ENCODE measurements at regions of chr6 and their contacts with region 1.

Region 1: GRCh38 chr6:42390228-42390934 is 61.3 kb downstream of the TRERF1 start:
- DNase-seq: peak; percentile 68
- H3K4me3 Mint-ChIP-seq: peak overlapping the region; percentile 63
- H3K27ac Mint-ChIP-seq: peak overlapping the region; percentile 99
- H3K4me1 Mint-ChIP-seq: peaks cover 89% of the 10 kb centered on the region
- H3K27me3 Mint-ChIP-seq: no peaks in the 10 kb centered on the region

Region 2: GRCh38 chr6:42359021-42359420 is 31.4 kb before region 1 on chr6:
- CTCF ChIA-PET with region 1: interaction called, 11 read pairs
- POLR2A ChIA-PET with region 1: no interaction called
- DNase-seq: no peak
- H3K4me3 Mint-ChIP-seq: no peak overlapping the region
- H3K27ac Mint-ChIP-seq: no peak overlapping the region
- H3K4me1 Mint-ChIP-seq: peaks cover 22% of the 10 kb centered on the region
- H3K27me3 Mint-ChIP-seq: no peaks in the 10 kb centered on the region

Region 3: DNA sequence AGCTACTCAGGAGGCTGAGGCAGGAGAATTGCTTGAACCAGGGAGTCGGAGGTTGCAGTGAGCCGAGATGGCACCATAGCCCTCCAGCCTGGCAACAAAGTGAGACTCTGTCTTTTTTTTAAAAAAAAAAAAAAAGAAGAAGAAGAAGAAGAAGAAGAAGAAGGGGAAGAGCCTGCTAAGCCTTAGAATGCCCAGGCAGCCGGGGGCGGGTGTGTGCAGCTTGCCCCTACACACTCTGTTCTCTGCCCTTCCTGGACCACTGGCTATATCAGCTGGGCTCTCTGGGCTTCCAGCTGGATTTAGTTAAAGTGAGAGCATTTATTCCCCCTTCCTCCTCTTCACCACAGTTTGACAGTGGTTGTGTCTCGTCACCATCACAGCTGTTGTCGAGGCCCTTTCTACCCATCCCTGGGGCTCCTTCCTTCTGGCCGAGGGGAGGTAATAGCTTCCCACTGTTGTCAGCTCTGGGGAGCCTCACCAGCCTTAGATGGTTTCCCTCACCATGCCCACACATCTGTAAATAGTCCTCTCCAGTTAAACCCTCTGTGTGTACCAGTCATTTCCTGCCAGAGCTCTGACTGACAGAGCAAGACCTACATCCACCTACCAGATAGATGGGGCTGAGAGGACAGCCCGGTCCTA is 16.2 kb before region 1 on chr6:
- CTCF ChIA-PET with region 1: interaction called, 14 read pairs
- POLR2A ChIA-PET with region 1: interaction called, 6 read pairs
- DNase-seq: peak; percentile 36
- H3K4me3 Mint-ChIP-seq: no peak overlapping the region
- H3K27ac Mint-ChIP-seq: peak overlapping the region; percentile 65
- H3K4me1 Mint-ChIP-seq: peaks cover 61% of the 10 kb centered on the region
- H3K27me3 Mint-ChIP-seq: no peaks in the 10 kb centered on the region

Region 4: DNA sequence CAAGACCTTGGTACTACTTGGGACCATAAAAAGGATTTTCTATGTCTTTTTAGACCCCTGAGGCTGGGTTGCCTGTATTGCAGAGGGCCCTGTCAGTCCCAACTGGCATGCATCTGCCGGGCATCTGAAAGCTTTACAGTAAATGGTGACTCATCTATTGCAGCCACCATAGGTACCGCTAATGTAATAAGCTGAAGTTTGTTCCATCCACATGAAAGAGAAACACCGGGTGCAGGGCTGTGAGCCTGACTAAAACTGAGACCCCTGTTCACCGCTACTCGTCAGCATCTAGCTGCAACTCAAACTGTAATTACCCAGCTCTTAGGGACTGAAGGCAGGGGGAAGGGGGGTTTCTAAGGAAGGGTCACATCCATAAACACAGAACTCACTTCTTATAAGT is 11.8 kb after region 1 on chr6:
- CTCF ChIA-PET with region 1: interaction called, 44 read pairs
- POLR2A ChIA-PET with region 1: no interaction called
- DNase-seq: peak; percentile 44
- H3K4me3 Mint-ChIP-seq: no peak overlapping the region
- H3K27ac Mint-ChIP-seq: peak overlapping the region; percentile 47
- H3K4me1 Mint-ChIP-seq: peaks cover 61% of the 10 kb centered on the region
- H3K27me3 Mint-ChIP-seq: no peaks in the 10 kb centered on the region

Measured in activated CD4-positive, alpha-beta T cell treated with anti-CD3 and anti-CD28 coated beads, Interleukin-2, amount 10 ng/mL, durations not matched to agents 7 days and 5 days (primary cell).